GM12878 (cell line): ENCODE measurements at regions of chr16 and their contacts with region 1.

Region 1: GRCh38 chr16:57519796-57520360 is 16.5 kb downstream of the CCDC102A start:
- DNase-seq: no peak
- ATAC-seq: peak; percentile 96
- H3K4me3 ChIP-seq: no peak overlapping the region
- H3K27ac ChIP-seq: no peak overlapping the region
- H3K4me1 ChIP-seq: peaks cover 12% of the 10 kb centered on the region
- H3K27me3 ChIP-seq: no peaks in the 10 kb centered on the region
- CTCF ChIP-seq: peak; percentile 91 to 99 (median 98); a peak in 5 of 6 replicates
- EP300 ChIP-seq: no peak
- POLR2A ChIP-seq: no peak
- RAD21 ChIP-seq: peak; percentile 96

Region 2: GRCh38 chr16:57147381-57148221 is 372.3 kb before region 1 on chr16:
- CTCF ChIA-PET with region 1: no interaction called
- POLR2A ChIA-PET with region 1: no interaction called
- RAD21 ChIA-PET with region 1: no interaction called
- SMC1A ChIA-PET with region 1: no interaction called
- in situ Hi-C with region 1: no loop called
- intact Hi-C with region 1: no loop called
- DNase-seq: no peak
- ATAC-seq: no peak
- H3K4me3 ChIP-seq: no peak overlapping the region
- H3K27ac ChIP-seq: no peak overlapping the region; the same call in 1 of the 2 replicates
- H3K4me1 ChIP-seq: peaks cover 15% of the 10 kb centered on the region
- H3K27me3 ChIP-seq: no peaks in the 10 kb centered on the region
- CTCF ChIP-seq: no peak
- EP300 ChIP-seq: no peak
- POLR2A ChIP-seq: no peak
- RAD21 ChIP-seq: no peak

Region 3: GRCh38 chr16:57383276-57384247 is 136.3 kb before region 1 on chr16:
- CTCF ChIA-PET with region 1: no interaction called
- POLR2A ChIA-PET with region 1: no interaction called
- RAD21 ChIA-PET with region 1: no interaction called
- SMC1A ChIA-PET with region 1: no interaction called
- in situ Hi-C with region 1: no loop called
- intact Hi-C with region 1: no loop called
- DNase-seq: no peak
- ATAC-seq: no peak
- H3K4me3 ChIP-seq: no peak overlapping the region
- H3K27ac ChIP-seq: no peak overlapping the region
- H3K4me1 ChIP-seq: peaks cover 61% of the 10 kb centered on the region
- H3K27me3 ChIP-seq: no peaks in the 10 kb centered on the region
- CTCF ChIP-seq: no peak
- EP300 ChIP-seq: no peak
- POLR2A ChIP-seq: no peak
- RAD21 ChIP-seq: no peak

Region 4: GRCh38 chr16:57432989-57433388 is 86.9 kb before region 1 on chr16:
- CTCF ChIA-PET with region 1: interaction called, 10 read pairs
- POLR2A ChIA-PET with region 1: no interaction called
- RAD21 ChIA-PET with region 1: no interaction called
- SMC1A ChIA-PET with region 1: no interaction called
- in situ Hi-C with region 1: no loop called
- intact Hi-C with region 1: no loop called
- DNase-seq: no peak
- ATAC-seq: no peak
- H3K4me3 ChIP-seq: no peak overlapping the region
- H3K27ac ChIP-seq: no peak overlapping the region
- H3K4me1 ChIP-seq: no peaks in the 10 kb centered on the region
- H3K27me3 ChIP-seq: no peaks in the 10 kb centered on the region
- CTCF ChIP-seq: no peak
- EP300 ChIP-seq: no peak
- POLR2A ChIP-seq: no peak
- RAD21 ChIP-seq: no peak

Region 5: GRCh38 chr16:57462209-57462977 is 57.5 kb before region 1 on chr16 and contains the start of gene POLR2C:
- CTCF ChIA-PET with region 1: interaction called, 51 read pairs
- POLR2A ChIA-PET with region 1: interaction called, 4 read pairs
- RAD21 ChIA-PET with region 1: interaction called, 4 read pairs
- SMC1A ChIA-PET with region 1: interaction called, 9 read pairs
- in situ Hi-C with region 1: no loop called
- intact Hi-C with region 1: loop called (anchors 5 kb)
- DNase-seq: peak; percentile 37
- ATAC-seq: peak; percentile 98
- H3K4me3 ChIP-seq: peak within 1 kb of the TSS; percentile 98
- H3K27ac ChIP-seq: peak within 1 kb of the TSS; percentile 64
- H3K4me1 ChIP-seq: peaks cover 7% of the 10 kb centered on the region
- H3K27me3 ChIP-seq: no peaks in the 10 kb centered on the region
- CTCF ChIP-seq: peak; percentile 96 to 99 (median 96); a peak in 5 of 6 replicates
- EP300 ChIP-seq: no peak
- POLR2A ChIP-seq: peak; percentile 100
- RAD21 ChIP-seq: peak; percentile 36
- polyA plus RNA-seq, gene POLR2C: 26.9 to 40.2 TPM

Region 6: GRCh38 chr16:57485916-57486857 is 33.7 kb before region 1 on chr16 and contains the start of gene DOK4:
- CTCF ChIA-PET with region 1: interaction called, 25 read pairs
- POLR2A ChIA-PET with region 1: interaction called, 6 read pairs
- RAD21 ChIA-PET with region 1: interaction called, 9 read pairs
- SMC1A ChIA-PET with region 1: interaction called, 4 read pairs
- in situ Hi-C with region 1: no loop called
- intact Hi-C with region 1: no loop called
- DNase-seq: no peak
- ATAC-seq: peak; percentile 93
- H3K4me3 ChIP-seq: peak within 1 kb of the TSS; percentile 60; the same call in 1 of the 2 replicates
- H3K27ac ChIP-seq: no peak within 1 kb of the TSS
- H3K4me1 ChIP-seq: peaks cover 15% of the 10 kb centered on the region
- H3K27me3 ChIP-seq: peaks cover 0 to 2% of the 10 kb centered on the region in 2 experiments; a peak in 1 of 4 replicates
- CTCF ChIP-seq: no peak
- EP300 ChIP-seq: no peak
- POLR2A ChIP-seq: no peak
- RAD21 ChIP-seq: no peak
- polyA plus RNA-seq, gene DOK4: 0.20 TPM in 1 of 2 experiments, not detected in the other

Region 7: GRCh38 chr16:57530104-57530521 is 10.2 kb after region 1 on chr16:
- CTCF ChIA-PET with region 1: interaction called, 16 read pairs
- POLR2A ChIA-PET with region 1: no interaction called
- RAD21 ChIA-PET with region 1: interaction called, 3 read pairs
- SMC1A ChIA-PET with region 1: interaction called, 6 read pairs
- in situ Hi-C with region 1: no loop called
- intact Hi-C with region 1: no loop called
- DNase-seq: no peak
- ATAC-seq: peak; percentile 85
- H3K4me3 ChIP-seq: peak overlapping the region; percentile 17; the same call in 1 of the 2 replicates
- H3K27ac ChIP-seq: peak overlapping the region; percentile 21
- H3K4me1 ChIP-seq: peaks cover 37% of the 10 kb centered on the region
- H3K27me3 ChIP-seq: no peaks in the 10 kb centered on the region
- CTCF ChIP-seq: no peak
- EP300 ChIP-seq: no peak; a peak in 1 of 4 replicates
- POLR2A ChIP-seq: no peak
- RAD21 ChIP-seq: no peak

Region 8: GRCh38 chr16:57544119-57544653 is 24.3 kb after region 1 on chr16:
- CTCF ChIA-PET with region 1: interaction called, 18 read pairs
- POLR2A ChIA-PET with region 1: no interaction called
- RAD21 ChIA-PET with region 1: interaction called, 17 read pairs
- SMC1A ChIA-PET with region 1: interaction called, 8 read pairs
- in situ Hi-C with region 1: no loop called
- intact Hi-C with region 1: no loop called
- DNase-seq: peak; percentile 95
- ATAC-seq: peak; percentile 81
- H3K4me3 ChIP-seq: peak overlapping the region; percentile 98
- H3K27ac ChIP-seq: peak overlapping the region; percentile 94
- H3K4me1 ChIP-seq: peaks cover 43% of the 10 kb centered on the region
- H3K27me3 ChIP-seq: no peaks in the 10 kb centered on the region
- CTCF ChIP-seq: no peak
- EP300 ChIP-seq: peak; percentile 99 to 100
- POLR2A ChIP-seq: peak; percentile 82
- RAD21 ChIP-seq: peak; percentile 23